Activated naive CD4-positive, alpha-beta T cell treated with anti-CD3 and anti-CD28 coated beads for 36 hours (primary cell): ENCODE measurements at regions of chr2 and their contacts with region 1.

Region 1: GRCh38 chr2:27050281-27050995 is 1.0 kb upstream of the AGBL5 start:
- DNase-seq: peak; percentile 97
- H3K4me3 Mint-ChIP-seq: peak overlapping the region; percentile 86
- H3K27ac Mint-ChIP-seq: peak overlapping the region; percentile 97
- H3K4me1 Mint-ChIP-seq: peaks cover 16% of the 10 kb centered on the region
- H3K27me3 Mint-ChIP-seq: peaks cover 6% of the 10 kb centered on the region

Region 2: GRCh38 chr2:26345545-26346453 is 704.6 kb before region 1 on chr2 and contains the start of gene SELENOI:
- CTCF ChIA-PET with region 1: no interaction called
- intact Hi-C with region 1: loop called (anchors 10 kb)
- DNase-seq: peak; percentile 99
- H3K4me3 Mint-ChIP-seq: peak within 1 kb of the TSS; percentile 90
- H3K27ac Mint-ChIP-seq: peak within 1 kb of the TSS; percentile 94
- H3K4me1 Mint-ChIP-seq: peaks cover 27% of the 10 kb centered on the region
- H3K27me3 Mint-ChIP-seq: no peaks in the 10 kb centered on the region
- total RNA-seq, gene SELENOI: 20.0 to 22.9 TPM

Region 3: GRCh38 chr2:26959331-26959730 is 91.1 kb before region 1 on chr2:
- CTCF ChIA-PET with region 1: interaction called, 5 read pairs
- intact Hi-C with region 1: loop called (anchors 1 kb)
- DNase-seq: no peak
- H3K4me3 Mint-ChIP-seq: no peak overlapping the region
- H3K27ac Mint-ChIP-seq: no peak overlapping the region
- H3K4me1 Mint-ChIP-seq: no peaks in the 10 kb centered on the region
- H3K27me3 Mint-ChIP-seq: peaks cover 12% of the 10 kb centered on the region

Region 4: DNA sequence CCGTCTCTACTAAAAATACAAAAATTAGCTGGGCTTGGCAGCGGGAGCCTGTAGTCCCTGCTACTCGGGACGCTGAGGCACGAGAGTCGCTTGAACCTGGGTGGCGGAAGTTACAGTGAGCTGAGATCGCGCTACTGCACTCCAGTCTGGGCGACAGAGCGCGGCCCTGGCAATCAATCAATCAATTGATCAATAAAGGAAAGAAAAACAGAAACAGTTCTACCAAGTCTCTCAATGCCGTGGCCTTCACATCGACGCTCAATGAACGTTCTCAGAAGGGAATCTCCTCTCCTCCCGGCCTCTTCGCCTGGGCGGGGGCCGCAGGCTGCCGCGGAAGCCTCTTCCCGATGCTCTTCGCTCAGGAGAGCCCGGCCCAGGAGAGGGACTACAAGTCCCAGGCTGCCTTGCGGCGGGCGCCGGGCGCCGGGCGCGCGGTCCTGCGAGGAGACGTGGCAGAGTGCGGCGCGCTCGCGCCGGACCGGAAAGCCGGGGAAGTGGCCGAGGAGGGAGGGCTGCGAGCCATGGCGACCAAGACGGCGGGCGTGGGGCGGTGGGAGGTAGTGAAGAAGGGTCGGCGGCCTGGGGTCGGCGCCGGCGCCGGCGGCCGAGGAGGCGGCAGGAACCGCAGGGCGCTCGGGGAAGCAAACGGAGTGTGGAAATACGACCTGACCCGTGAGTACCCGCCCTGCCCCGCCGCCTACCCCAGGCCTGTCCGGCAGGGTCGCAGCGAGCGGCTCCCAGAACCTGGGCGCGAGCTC is 17.8 kb before region 1 on chr2 and contains the start of gene TMEM214:
- CTCF ChIA-PET with region 1: interaction called, 5 read pairs
- intact Hi-C with region 1: loop called (anchors 1 kb)
- DNase-seq: peak; percentile 83
- H3K4me3 Mint-ChIP-seq: peak within 1 kb of the TSS; percentile 94
- H3K27ac Mint-ChIP-seq: peak within 1 kb of the TSS; percentile 77
- H3K4me1 Mint-ChIP-seq: peaks cover 35% of the 10 kb centered on the region
- H3K27me3 Mint-ChIP-seq: no peaks in the 10 kb centered on the region
- total RNA-seq, gene TMEM214: 38.3 to 41.3 TPM

Region 5: DNA sequence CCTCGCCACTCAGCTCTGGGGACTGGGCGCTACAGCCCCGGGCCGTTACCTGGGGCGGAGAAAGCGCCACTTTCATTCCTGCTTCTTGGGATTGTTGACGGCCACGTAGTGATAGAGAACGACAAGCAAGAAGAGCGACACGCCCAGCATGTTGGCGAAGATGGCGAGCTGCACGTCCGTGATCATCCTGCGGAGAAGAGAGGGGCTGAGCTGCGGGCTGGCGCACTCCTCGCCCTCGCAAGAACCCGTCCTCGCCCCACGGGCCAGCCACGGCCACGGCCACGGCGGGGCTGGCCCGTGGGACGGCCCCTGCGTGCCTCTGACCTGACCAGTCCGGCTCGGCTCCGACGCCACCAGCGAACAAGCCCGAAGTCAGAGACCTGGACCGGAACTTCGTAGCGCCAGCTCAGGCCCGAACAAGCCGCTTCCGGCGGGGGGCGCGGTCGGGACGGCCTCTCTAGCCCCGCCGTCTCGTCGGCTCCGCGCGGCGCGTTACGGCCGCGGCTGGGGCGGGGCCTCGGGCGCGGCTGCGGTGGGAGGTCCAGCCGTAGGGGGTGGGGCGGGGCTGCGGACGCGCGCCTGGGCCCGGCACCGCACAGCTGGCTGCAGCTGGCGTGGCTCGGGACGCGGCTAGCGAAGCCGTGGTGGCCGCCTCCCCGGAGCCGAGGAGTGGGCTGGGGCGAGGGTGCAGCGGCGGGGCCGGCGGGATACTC is 21.0 kb after region 1 on chr2 and contains the start of gene OST4:
- CTCF ChIA-PET with region 1: interaction called, 14 read pairs
- intact Hi-C with region 1: loop called (anchors 1 kb)
- DNase-seq: peak; percentile 88
- H3K4me3 Mint-ChIP-seq: peak within 1 kb of the TSS; percentile 97
- H3K27ac Mint-ChIP-seq: peak within 1 kb of the TSS; percentile 91
- H3K4me1 Mint-ChIP-seq: peaks cover 76% of the 10 kb centered on the region
- H3K27me3 Mint-ChIP-seq: no peaks in the 10 kb centered on the region
- total RNA-seq, gene OST4: 257 to 282 TPM

Region 6: DNA sequence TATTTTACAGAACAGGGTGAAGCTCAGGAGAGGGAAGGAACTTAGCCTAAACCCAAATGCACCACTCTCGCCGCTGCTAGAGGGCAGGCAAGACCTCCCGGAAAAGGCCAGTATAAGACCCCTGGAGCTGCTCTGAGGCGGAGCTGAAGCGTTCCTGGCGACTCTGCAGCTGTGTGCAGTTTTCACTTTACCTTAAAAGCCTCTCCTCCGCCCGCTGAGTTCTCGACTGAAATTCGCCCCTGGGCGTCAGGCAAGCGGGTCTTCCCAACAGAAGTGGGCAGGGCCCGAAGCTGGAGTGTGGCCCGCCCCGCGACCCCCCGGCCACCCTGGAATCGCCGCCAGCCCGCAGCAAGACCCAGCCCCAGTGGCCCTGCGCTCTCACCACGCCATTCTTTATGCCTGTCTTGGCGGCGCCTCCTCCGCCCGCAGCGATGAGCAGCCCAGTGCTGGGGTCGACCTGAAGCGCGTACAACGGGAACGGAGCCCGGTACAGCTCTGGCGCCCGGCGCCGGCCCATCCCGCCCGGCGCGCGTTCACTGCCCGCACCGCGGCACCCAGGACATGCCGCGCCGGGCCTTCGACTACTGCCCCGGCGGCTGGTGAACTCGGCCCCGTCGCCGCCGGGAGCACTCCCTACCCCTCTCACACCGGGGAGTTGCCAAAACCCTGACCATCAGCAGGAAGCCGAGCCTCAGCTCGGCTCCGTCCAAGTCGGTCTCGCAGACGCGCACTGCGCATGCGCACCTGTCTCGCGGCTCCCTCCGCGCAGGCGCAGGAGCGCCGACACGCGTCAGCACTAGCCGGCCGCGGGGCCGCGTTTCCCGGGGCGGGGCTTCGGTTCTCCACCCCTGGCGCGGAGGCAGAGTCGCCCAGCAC is 83.7 kb after region 1 on chr2 and contains the start of gene PREB:
- CTCF ChIA-PET with region 1: no interaction called
- intact Hi-C with region 1: loop called (anchors 2 kb)
- DNase-seq: peak; percentile 98
- H3K4me3 Mint-ChIP-seq: peak within 1 kb of the TSS; percentile 95
- H3K27ac Mint-ChIP-seq: peak within 1 kb of the TSS; percentile 93
- H3K4me1 Mint-ChIP-seq: peaks cover 20% of the 10 kb centered on the region
- H3K27me3 Mint-ChIP-seq: no peaks in the 10 kb centered on the region
- total RNA-seq, gene PREB: 45.2 to 49.5 TPM

Region 7: DNA sequence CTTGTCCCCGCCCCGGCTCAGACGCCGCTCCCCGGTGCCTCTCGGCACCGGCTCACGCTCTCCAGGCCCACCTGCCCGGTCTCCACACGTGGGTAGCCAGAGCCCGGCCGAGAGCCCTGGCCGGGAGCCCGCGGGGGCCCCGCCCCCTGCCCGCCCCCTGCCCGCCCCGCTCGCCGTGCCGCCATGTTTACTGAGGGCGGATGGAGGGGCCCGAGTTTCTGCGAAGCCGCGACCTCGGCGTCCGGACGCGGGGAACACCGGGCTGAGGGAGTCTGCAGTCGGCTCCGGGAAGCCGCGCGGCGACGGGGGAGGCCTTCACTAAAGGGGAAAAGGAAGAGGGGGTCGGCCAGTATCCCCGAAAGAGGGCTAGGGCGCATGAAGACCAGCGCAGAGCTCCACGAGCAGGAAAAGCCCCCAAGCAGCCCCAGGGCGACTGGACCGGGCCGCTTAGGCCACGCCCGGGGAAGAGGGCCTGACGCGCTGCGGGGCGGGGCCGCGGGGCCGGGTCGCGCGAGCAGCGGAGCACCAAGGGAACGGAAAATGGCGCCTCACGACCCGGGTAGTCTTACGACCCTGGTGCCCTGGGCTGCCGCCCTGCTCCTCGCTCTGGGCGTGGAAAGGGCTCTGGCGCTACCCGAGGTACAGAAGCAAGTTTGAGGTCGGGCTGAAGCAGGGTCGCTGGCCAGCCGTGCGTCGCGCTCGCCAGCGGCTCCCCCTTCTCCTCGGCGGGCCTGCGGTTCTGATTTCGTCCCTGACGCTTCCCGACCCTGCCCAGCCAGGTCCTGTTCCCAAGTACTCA is 161.6 kb after region 1 on chr2 and contains the starts of genes ATRAID and SLC5A6:
- CTCF ChIA-PET with region 1: no interaction called
- intact Hi-C with region 1: loop called (anchors 1 kb)
- DNase-seq: peak; percentile 88
- H3K4me3 Mint-ChIP-seq: peak within 1 kb of the TSS; percentile 98
- H3K27ac Mint-ChIP-seq: peak within 1 kb of the TSS; percentile 99
- H3K4me1 Mint-ChIP-seq: peaks cover 29% of the 10 kb centered on the region
- H3K27me3 Mint-ChIP-seq: no peaks in the 10 kb centered on the region
- total RNA-seq, gene ATRAID: 80.5 to 80.8 TPM
- total RNA-seq, gene SLC5A6: 22.6 to 24.8 TPM

Region 8: GRCh38 chr2:27320958-27321543 is 270.6 kb after region 1 on chr2:
- CTCF ChIA-PET with region 1: no interaction called
- intact Hi-C with region 1: no loop called
- DNase-seq: no peak
- H3K4me3 Mint-ChIP-seq: no peak overlapping the region
- H3K27ac Mint-ChIP-seq: no peak overlapping the region
- H3K4me1 Mint-ChIP-seq: peaks cover 14% of the 10 kb centered on the region
- H3K27me3 Mint-ChIP-seq: no peaks in the 10 kb centered on the region